Mammary epithelial cell (primary cell): ENCODE measurements at regions of chr5 and their contacts with region 1.

Region 1: GRCh38 chr5:73994963-73995362 is 369.0 kb downstream of the ARHGEF28 start:
- DNase-seq: peak; percentile 97
- H3K4me3 ChIP-seq: no peak overlapping the region
- H3K27ac ChIP-seq: peak overlapping the region; percentile 60
- H3K4me1 ChIP-seq: peaks cover 23% of the 10 kb centered on the region
- H3K27me3 ChIP-seq: no peaks in the 10 kb centered on the region
- CTCF ChIP-seq: peak; percentile 54 to 56

Region 2: DNA sequence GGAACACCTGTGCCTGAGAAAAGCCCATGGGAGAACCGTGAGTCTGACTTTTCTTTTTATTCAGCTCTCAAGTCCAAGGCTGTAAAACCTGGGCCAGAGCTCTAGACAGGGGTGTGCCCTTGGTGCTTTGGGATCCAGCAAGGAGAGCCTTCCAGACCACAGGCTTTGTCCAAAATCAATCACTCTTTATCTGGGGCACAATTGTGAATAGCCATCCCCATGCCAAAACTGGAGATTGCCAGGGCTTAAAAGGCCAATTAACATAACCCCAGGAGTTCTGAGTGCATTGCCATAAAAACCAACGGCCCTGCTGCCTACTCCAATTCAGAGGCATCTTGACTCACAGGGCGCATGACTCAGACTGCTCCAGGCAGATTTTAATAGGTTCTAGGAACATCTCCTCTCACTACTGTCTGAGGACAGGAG is 22.8 kb after region 1 on chr5:
- CTCF ChIA-PET with region 1: no interaction called
- dilution Hi-C with region 1: no loop called
- in situ Hi-C with region 1: no loop called
- intact Hi-C with region 1: loop called (anchors 2 kb)
- DNase-seq: peak; percentile 94
- H3K4me3 ChIP-seq: no peak overlapping the region
- H3K27ac ChIP-seq: peak overlapping the region; percentile 82
- H3K4me1 ChIP-seq: peaks cover 41% of the 10 kb centered on the region
- H3K27me3 ChIP-seq: no peaks in the 10 kb centered on the region
- CTCF ChIP-seq: no peak

Region 3: DNA sequence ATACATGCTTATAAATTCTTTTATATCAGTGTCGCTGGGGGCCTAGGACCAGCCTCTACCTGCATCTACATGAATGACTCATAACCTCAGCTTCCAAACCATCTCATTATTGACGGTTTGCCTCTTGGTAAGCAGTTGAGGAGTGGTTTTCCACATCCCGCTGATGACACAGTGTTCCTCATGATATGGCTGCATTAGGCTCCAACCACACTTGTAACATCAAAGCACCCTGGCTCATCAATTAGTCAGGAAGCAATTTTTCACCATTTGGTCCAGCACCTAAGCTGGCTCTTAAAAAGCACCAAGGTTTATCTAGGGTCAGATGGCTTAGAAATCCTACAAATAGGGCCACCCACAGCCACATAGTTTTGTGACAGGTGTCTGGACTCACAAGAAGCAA is 33.4 kb after region 1 on chr5:
- CTCF ChIA-PET with region 1: no interaction called
- dilution Hi-C with region 1: no loop called
- in situ Hi-C with region 1: no loop called
- intact Hi-C with region 1: loop called (anchors 2 kb)
- DNase-seq: peak; percentile 96
- H3K4me3 ChIP-seq: no peak overlapping the region
- H3K27ac ChIP-seq: peak overlapping the region; percentile 45
- H3K4me1 ChIP-seq: peaks cover 39% of the 10 kb centered on the region
- H3K27me3 ChIP-seq: no peaks in the 10 kb centered on the region
- CTCF ChIP-seq: no peak